ENCODE measurements at regions of chr7 and their contacts with region 1.

Region 1: GRCh38 chr7:14902589-14903067 is at the start of gene DGKB:
- DNase-seq: peak in 9 of 10 donors; percentile 15 to 83 (median 68)
- H3K4me3 ChIP-seq: peak within 1 kb of the TSS; percentile 33 to 74 (median 56)
- H3K27ac ChIP-seq: peak within 1 kb of the TSS in 57 of 59 donors; percentile 7 to 90 (median 74)
- H3K27me3 ChIP-seq: peaks cover 0 to 5% (median 0%) of the 10 kb centered on the region in 45 donors
- CTCF ChIP-seq: no peak
- total RNA-seq, gene DGKB: 40.3 to 185 (median 111) TPM

Region 2: DNA sequence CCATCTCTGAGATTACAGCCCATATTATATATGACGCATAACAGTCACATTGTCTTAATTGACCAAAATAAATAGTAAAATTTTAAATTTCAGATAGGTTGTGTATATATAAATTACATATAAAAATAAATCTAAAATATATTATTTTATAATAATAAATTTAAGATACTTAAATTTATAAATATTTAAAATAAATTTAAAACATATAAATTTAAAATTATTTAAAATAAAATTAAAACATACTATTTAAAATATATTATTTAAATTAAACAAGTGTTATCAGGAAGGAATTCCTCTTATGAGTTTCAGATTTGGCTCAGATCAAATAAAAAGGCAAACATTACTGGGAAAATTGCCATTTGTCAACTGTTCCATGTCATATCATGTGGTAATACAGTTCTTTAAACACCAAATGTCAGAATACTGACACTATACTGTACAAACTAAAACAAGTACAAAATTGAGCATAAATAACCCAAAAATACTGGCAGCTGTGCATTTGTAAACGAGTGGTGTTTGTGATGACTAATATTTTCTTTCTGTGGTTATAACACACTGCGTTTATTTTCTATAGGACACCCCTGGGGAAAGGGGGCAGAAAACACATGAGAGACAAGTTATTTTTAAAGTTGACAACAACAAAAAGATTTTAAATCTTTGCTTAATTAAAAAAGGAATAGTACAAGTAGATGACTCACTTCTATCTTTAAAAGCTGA is 71.2 kb after region 1 on chr7:
- intact Hi-C with region 1: loop called in 1 of 2 experiments (anchors 10 kb)
- DNase-seq: no peak
- H3K4me3 ChIP-seq: peak overlapping the region in 23 of 59 donors; percentile 0 to 36 (median 13)
- H3K27ac ChIP-seq: peak overlapping the region in 1 of 59 donors; percentile 4
- H3K27me3 ChIP-seq: no peaks in the 10 kb centered on the region
- CTCF ChIP-seq: no peak